ENCODE measurements at regions of chr7 and their contacts with region 1.

Region 1: DNA sequence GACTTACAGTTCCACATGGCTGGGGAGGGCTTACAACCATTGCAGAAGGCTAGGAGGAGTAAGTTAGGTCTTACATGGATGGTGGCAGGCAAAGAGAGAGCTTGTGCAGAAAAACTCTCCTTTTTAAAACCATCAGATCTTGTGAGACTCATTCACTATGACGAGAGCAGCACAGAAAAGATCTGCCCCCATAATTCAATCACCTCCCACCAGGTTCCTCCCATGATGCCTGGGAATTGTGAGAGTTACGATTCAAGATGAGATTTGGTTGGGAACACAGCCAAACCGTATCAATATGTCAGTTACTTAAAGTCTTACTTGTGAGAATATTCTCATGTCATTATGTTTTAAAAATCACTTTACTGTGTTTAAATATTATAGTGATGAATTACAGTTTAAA is 481.9 kb downstream of the ARL4A start:
- DNase-seq: no peak
- ATAC-seq: no peak
- H3K4me3 ChIP-seq: no peak overlapping the region
- H3K27ac ChIP-seq: no peak overlapping the region
- H3K4me1 ChIP-seq: no peaks in the 10 kb centered on the region
- H3K27me3 ChIP-seq: no peaks in the 10 kb centered on the region
- CTCF ChIP-seq: no peak

Region 2: DNA sequence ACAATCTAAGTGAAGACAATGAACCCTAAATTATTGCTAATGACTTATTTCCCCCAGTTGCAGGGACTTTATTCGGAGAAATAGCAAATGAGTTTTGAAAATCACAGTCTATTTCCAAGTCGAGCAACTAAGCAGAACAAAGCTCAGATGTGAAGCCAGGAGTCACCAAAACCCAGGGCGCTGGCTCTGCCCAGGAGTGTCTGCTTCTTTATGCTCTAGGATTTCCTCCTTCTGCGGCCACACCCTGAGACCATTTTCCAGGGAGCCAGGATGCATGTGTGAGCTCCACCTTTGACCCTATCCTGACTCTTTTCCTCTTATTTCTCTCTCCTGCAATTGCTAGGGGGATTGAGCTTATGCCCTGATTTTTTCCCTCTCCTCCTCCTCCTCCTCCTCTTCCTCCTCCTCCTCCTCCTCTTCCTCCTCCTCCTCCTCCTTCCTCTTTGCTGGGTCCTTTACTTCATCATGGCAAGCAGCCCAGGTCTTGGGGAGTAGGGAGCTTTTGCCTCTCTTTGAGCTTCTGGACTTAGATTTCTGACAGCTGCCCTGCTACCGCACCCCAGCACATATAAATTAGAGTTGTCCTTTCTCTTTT is 247.5 kb before region 1 on chr7:
- CTCF ChIA-PET with region 1: interaction called, 13 read pairs
- POLR2A ChIA-PET with region 1: no interaction called
- in situ Hi-C with region 1: no loop called
- intact Hi-C with region 1: no loop called
- DNase-seq: no peak
- ATAC-seq: no peak
- H3K4me3 ChIP-seq: no peak overlapping the region
- H3K27ac ChIP-seq: no peak overlapping the region
- H3K4me1 ChIP-seq: no peaks in the 10 kb centered on the region
- H3K27me3 ChIP-seq: no peaks in the 10 kb centered on the region
- CTCF ChIP-seq: no peak

Region 3: GRCh38 chr7:13197501-13197900 is 28.1 kb after region 1 on chr7:
- CTCF ChIA-PET with region 1: no interaction called
- POLR2A ChIA-PET with region 1: no interaction called
- in situ Hi-C with region 1: no loop called
- intact Hi-C with region 1: no loop called
- DNase-seq: no peak
- ATAC-seq: no peak
- H3K4me3 ChIP-seq: no peak overlapping the region
- H3K27ac ChIP-seq: no peak overlapping the region
- H3K4me1 ChIP-seq: no peaks in the 10 kb centered on the region
- H3K27me3 ChIP-seq: no peaks in the 10 kb centered on the region
- CTCF ChIP-seq: no peak